ENCODE measurements at regions of chr1 and their contacts with region 1.

Region 1: GRCh38 chr1:168709405-168710305 is 19.4 kb downstream of the DPT start:
- DNase-seq: no peak
- ATAC-seq: peak; percentile 40 to 85

Region 2: DNA sequence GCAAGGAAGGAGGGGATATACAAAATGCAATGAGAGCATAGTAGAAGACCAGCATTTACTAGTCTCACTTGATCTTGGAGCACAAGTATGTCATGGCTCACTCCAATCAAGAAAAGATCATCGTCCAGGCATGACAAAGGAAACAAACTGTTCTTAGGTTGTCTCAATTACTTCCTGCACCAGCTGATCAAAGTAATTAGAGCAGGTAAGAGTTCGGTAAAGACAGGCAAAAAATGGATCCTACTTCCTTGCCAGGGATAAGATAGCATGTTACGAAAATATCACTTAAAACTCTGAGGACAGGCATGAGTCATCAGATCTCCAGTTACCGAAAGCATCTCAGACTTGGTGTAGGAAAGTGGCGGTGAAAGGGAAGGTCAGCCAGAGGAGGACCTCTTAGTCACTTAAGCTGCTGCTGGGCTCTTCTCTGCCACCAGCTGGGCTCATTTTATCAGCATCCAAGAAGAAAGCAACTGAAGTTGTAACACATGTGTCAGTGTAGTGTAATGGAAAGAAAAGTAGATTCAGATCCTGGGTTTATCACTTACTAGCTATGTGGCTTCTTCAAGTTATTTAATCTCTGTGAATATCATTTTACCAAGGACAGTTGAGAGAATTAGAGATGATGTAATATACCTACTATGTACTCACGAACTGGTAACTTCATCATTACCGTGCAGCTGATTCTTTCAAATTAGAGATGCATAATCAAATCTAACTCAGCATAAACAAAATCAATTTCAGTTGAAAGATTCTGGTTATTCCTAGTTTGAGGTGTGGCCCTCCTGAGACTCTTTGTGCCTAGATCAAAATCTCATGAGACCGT is 86.4 kb before region 1 on chr1:
- intact Hi-C with region 1: loop called in 1 of 2 experiments (anchors 5 kb)
- DNase-seq: peak; percentile 48
- ATAC-seq: peak in 1 of 2 donors; percentile 95

Measured in left cardiac atrium (tissue), 4 donors.